CD4-positive, alpha-beta memory T cell (primary cell): ENCODE measurements at regions of chr21 and their contacts with region 1.

Region 1: GRCh38 chr21:35051287-35051818 is 2.3 kb upstream of the RUNX1 start:
- DNase-seq: peak; percentile 83 to 86 (median 84)
- H3K4me3 ChIP-seq: peak overlapping the region in 1 of 2 donors; percentile 4
- H3K4me3 Mint-ChIP-seq: peak overlapping the region; percentile 51 to 100 (median 94)
- H3K27ac ChIP-seq: peak overlapping the region; percentile 82
- H3K27ac Mint-ChIP-seq: peak overlapping the region; percentile 92 to 100 (median 99)
- H3K4me1 ChIP-seq: peaks cover 33% of the 10 kb centered on the region
- H3K4me1 Mint-ChIP-seq: peaks cover 26 to 55% (median 35%) of the 10 kb centered on the region in 4 donors
- H3K27me3 ChIP-seq: no peaks in the 10 kb centered on the region
- H3K27me3 Mint-ChIP-seq: peaks cover 1 to 3% of the 10 kb centered on the region in 2 donors

Region 2: GRCh38 chr21:34888569-34889319 is 162.6 kb before region 1 on chr21:
- CTCF ChIA-PET with region 1: interaction called, 108 read pairs
- POLR2A ChIA-PET with region 1: interaction called, 280 read pairs
- intact Hi-C with region 1: loop called (anchors 1 kb)
- DNase-seq: peak; percentile 65 to 83 (median 68)
- H3K4me3 ChIP-seq: peak overlapping the region; percentile 52 to 78
- H3K4me3 Mint-ChIP-seq: peak overlapping the region; percentile 90 to 99 (median 95)
- H3K27ac ChIP-seq: peak overlapping the region; percentile 75
- H3K27ac Mint-ChIP-seq: peak overlapping the region; percentile 93 to 100 (median 99)
- H3K4me1 ChIP-seq: peaks cover 69% of the 10 kb centered on the region
- H3K4me1 Mint-ChIP-seq: peaks cover 25 to 68% (median 44%) of the 10 kb centered on the region in 4 donors
- H3K27me3 ChIP-seq: no peaks in the 10 kb centered on the region
- H3K27me3 Mint-ChIP-seq: peaks cover 0 to 1% of the 10 kb centered on the region in 2 donors

Region 3: GRCh38 chr21:34952701-34953100 is 98.7 kb before region 1 on chr21:
- CTCF ChIA-PET with region 1: interaction called, 3 read pairs
- POLR2A ChIA-PET with region 1: interaction called, 14 read pairs
- intact Hi-C with region 1: no loop called
- DNase-seq: no peak
- H3K4me3 ChIP-seq: no peak overlapping the region
- H3K4me3 Mint-ChIP-seq: peak overlapping the region in 4 of 8 donors; percentile 4 to 52 (median 30)
- H3K27ac ChIP-seq: no peak overlapping the region
- H3K27ac Mint-ChIP-seq: peak overlapping the region in 5 of 7 donors; percentile 13 to 85 (median 66)
- H3K4me1 ChIP-seq: peaks cover 70% of the 10 kb centered on the region
- H3K4me1 Mint-ChIP-seq: peaks cover 57 to 93% (median 74%) of the 10 kb centered on the region in 4 donors
- H3K27me3 ChIP-seq: no peaks in the 10 kb centered on the region
- H3K27me3 Mint-ChIP-seq: no peaks in the 10 kb centered on the region

Region 4: DNA sequence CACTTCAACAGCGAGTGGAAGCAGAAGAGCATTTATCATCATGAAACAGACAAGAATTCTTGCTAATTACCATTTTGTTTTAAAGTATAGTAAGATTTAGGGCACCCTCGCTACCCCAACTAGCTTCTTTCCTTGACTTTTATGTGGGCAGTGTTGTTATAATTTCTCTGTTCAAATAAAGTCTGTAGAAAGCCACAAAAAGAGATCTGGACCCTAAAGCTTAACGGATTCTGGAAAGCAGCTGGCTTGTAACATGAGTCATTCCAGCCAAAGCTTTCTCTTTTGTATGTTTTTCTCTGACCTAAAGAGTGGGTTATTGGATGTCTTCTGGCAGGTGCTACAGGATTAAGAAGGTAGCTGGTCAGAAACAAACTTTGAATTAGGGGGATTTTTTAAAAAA is 39.7 kb before region 1 on chr21:
- CTCF ChIA-PET with region 1: interaction called, 4 read pairs
- POLR2A ChIA-PET with region 1: interaction called, 729 read pairs
- intact Hi-C with region 1: loop called (anchors 5 kb)
- DNase-seq: no peak
- H3K4me3 ChIP-seq: no peak overlapping the region
- H3K4me3 Mint-ChIP-seq: peak overlapping the region; percentile 7 to 82 (median 28)
- H3K27ac ChIP-seq: no peak overlapping the region
- H3K27ac Mint-ChIP-seq: peak overlapping the region; percentile 25 to 62 (median 54)
- H3K4me1 ChIP-seq: peaks cover 97% of the 10 kb centered on the region
- H3K4me1 Mint-ChIP-seq: peaks cover 80 to 94% (median 87%) of the 10 kb centered on the region in 4 donors
- H3K27me3 ChIP-seq: no peaks in the 10 kb centered on the region
- H3K27me3 Mint-ChIP-seq: no peaks in the 10 kb centered on the region

Region 5: GRCh38 chr21:35204850-35205541 is 153.6 kb after region 1 on chr21:
- CTCF ChIA-PET with region 1: interaction called, 5 read pairs
- POLR2A ChIA-PET with region 1: interaction called, 6 read pairs
- intact Hi-C with region 1: loop called (anchors 1 kb)
- DNase-seq: peak in 1 of 5 donors; percentile 5
- H3K4me3 ChIP-seq: peak overlapping the region in 1 of 2 donors; percentile 38
- H3K4me3 Mint-ChIP-seq: peak overlapping the region; percentile 76 to 94 (median 82)
- H3K27ac ChIP-seq: no peak overlapping the region
- H3K27ac Mint-ChIP-seq: peak overlapping the region in 1 of 7 donors; percentile 18
- H3K4me1 ChIP-seq: peaks cover 16% of the 10 kb centered on the region
- H3K4me1 Mint-ChIP-seq: peaks cover 8 to 20% (median 15%) of the 10 kb centered on the region in 4 donors
- H3K27me3 ChIP-seq: no peaks in the 10 kb centered on the region
- H3K27me3 Mint-ChIP-seq: peaks cover 0 to 2% of the 10 kb centered on the region in 2 donors